Left ventricle myocardium inferior (tissue), 1 donor: ENCODE measurements at regions of chr17 and their contacts with region 1.

Region 1: GRCh38 chr17:35747540-35748017 is 5.5 kb downstream of the GAS2L2 start:
- DNase-seq: peak; percentile 67
- H3K4me3 ChIP-seq: no peak overlapping the region
- H3K27ac ChIP-seq: no peak overlapping the region
- H3K4me1 ChIP-seq: peaks cover 24% of the 10 kb centered on the region
- H3K27me3 ChIP-seq: peaks cover 97% of the 10 kb centered on the region
- CTCF ChIP-seq: peak; percentile 90

Region 2: DNA sequence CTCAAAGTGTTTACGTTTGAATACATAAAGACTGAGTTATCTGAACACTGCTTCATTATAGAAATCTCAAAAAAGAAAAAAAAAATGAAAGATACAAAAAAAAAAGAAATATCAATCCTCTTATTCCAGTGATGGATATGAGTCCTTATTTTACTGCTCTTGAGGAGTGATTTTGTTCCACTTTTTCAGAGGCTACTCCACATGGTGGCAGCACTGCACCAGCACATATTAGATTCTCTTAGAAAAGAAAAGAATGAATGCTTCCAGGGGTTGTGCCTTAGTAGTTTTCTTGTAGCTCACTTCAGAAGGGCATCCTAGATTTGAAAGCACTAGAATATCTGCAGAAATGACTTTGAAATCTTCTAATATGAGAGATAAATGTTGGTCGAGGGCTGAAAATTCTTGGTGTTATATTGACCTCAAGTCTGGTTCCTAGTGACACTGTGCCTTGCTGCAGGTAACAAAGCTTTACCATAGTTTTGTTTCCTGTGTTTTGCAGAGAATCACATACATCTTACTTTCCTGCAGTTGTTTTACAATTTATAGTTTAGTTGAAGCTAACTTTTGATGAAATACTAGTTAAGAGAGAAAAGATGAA is 134.6 kb before region 1 on chr17:
- intact Hi-C with region 1: loop called (anchors 5 kb)
- DNase-seq: no peak
- H3K4me3 ChIP-seq: no peak overlapping the region
- H3K27ac ChIP-seq: no peak overlapping the region
- H3K4me1 ChIP-seq: peaks cover 33% of the 10 kb centered on the region
- H3K27me3 ChIP-seq: no peaks in the 10 kb centered on the region
- CTCF ChIP-seq: peak; percentile 69

Region 3: GRCh38 chr17:35684055-35684802 is 63.4 kb before region 1 on chr17:
- intact Hi-C with region 1: no loop called
- DNase-seq: no peak
- H3K4me3 ChIP-seq: no peak overlapping the region
- H3K27ac ChIP-seq: no peak overlapping the region
- H3K4me1 ChIP-seq: no peaks in the 10 kb centered on the region
- H3K27me3 ChIP-seq: no peaks in the 10 kb centered on the region
- CTCF ChIP-seq: no peak

Region 4: GRCh38 chr17:35804658-35805192 is 57.1 kb after region 1 on chr17:
- intact Hi-C with region 1: no loop called
- DNase-seq: no peak
- H3K4me3 ChIP-seq: no peak overlapping the region
- H3K27ac ChIP-seq: no peak overlapping the region
- H3K4me1 ChIP-seq: peaks cover 44% of the 10 kb centered on the region
- H3K27me3 ChIP-seq: no peaks in the 10 kb centered on the region
- CTCF ChIP-seq: peak; percentile 89